ENCODE measurements at regions of chr1 and their contacts with region 1.

Region 1: DNA sequence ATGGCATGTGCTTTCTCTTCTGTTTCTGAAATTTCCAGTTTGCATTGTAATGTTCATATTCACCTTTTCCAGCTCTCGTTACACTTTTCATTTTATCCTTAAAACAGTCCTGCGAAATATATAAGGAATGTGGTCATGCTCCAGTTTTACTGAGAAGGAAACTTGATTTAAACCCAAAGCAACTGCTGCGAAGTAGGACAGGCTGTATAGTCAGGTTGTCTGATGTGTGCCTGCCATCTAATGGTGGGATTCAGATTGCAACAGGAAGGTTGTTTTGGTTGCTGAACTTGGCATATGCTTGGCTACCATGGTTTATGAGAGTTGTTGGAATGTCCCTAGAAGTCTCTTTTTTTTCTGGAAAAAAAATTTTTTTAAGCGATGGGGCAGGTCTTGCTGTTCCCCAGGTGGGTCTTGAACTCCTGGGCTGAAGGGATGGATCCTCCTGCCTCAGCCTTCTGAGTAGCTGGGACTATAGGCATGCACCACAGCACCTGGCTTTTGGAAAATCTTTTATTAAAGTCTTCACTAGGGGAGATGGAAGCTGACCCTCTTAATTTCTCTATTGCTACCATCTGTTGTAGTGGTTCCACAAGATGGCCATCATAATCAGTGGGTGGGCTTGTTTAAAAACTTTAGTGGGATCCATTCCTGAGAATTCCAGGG is 86.9 kb downstream of the UCK2 start:
- DNase-seq: no peak
- H3K4me3 ChIP-seq: no peak overlapping the region
- H3K27ac ChIP-seq: no peak overlapping the region
- H3K4me1 ChIP-seq: peaks cover 10% of the 10 kb centered on the region
- H3K27me3 ChIP-seq: no peaks in the 10 kb centered on the region
- CTCF ChIP-seq: peak; percentile 75 to 94 (median 92)
- POLR2A ChIP-seq: no peak

Region 2: DNA sequence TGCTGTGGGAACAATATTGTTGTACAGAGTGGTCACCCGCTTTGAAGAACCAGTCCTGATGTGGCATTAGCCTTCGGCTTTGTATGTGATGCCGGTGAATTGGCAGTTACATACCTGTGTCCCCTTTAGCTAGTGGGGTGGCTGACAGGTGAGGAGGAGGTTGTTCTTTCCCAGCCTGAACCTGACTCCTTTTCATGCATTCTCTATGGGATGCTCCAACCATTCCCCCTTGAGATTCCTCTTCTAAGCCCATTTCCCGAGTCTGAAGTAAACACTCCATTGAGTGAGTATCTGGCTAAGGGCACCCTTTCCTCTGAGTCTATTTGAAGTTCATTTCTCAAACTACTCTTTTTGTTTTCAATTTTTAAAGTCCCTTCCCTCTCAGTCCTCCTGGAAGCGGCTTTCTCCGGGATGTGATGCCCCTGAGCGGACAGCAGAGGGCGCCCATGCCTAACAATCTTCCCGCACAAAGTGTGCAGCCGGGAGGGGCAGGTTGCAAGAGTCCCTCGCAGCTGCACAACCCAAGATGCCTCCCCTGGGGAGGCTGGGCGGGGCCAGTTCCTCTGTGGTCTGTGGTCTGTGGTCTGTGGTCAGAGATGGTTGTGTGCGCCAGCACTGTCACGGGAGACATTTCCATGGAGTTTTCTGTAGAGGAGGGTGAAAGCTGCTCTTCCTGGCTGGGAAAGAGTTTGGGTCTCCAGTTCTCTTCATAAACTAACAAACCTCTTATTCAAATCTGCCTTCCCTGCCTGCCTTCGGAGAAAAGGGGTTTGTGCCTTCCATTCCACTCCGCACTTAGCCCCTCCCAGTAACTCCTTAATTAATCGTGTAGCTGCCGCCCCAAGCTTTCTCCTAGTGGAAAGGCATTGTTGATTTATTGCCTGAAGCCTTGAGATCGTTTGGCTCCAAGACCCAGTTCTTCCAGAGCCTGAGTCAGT is 521.4 kb before region 1 on chr1:
- intact Hi-C with region 1: loop called (anchors 10 kb)
- DNase-seq: peak in 1 of 2 donors; percentile 91
- H3K4me3 ChIP-seq: peak overlapping the region in 1 of 2 donors; percentile 16
- H3K27ac ChIP-seq: peak overlapping the region; percentile 46
- H3K4me1 ChIP-seq: peaks cover 7% of the 10 kb centered on the region
- H3K27me3 ChIP-seq: no peaks in the 10 kb centered on the region
- CTCF ChIP-seq: peak; percentile 77 to 94 (median 86)
- POLR2A ChIP-seq: no peak

Region 3: GRCh38 chr1:165600793-165601192 is 313.5 kb before region 1 on chr1:
- intact Hi-C with region 1: loop called (anchors 5 kb)
- DNase-seq: no peak
- H3K4me3 ChIP-seq: no peak overlapping the region
- H3K27ac ChIP-seq: no peak overlapping the region
- H3K4me1 ChIP-seq: peaks cover 11% of the 10 kb centered on the region
- H3K27me3 ChIP-seq: no peaks in the 10 kb centered on the region
- CTCF ChIP-seq: no peak
- POLR2A ChIP-seq: no peak

Region 4: GRCh38 chr1:165717918-165718515 is 196.2 kb before region 1 on chr1:
- intact Hi-C with region 1: loop called (anchors 10 kb)
- DNase-seq: no peak
- H3K4me3 ChIP-seq: no peak overlapping the region
- H3K27ac ChIP-seq: no peak overlapping the region
- H3K4me1 ChIP-seq: no peaks in the 10 kb centered on the region
- H3K27me3 ChIP-seq: no peaks in the 10 kb centered on the region
- CTCF ChIP-seq: peak in 1 of 3 experiments; percentile 23
- POLR2A ChIP-seq: no peak

Measured in vagina (tissue), 2 donors.